ENCODE measurements at regions of chr1 and their contacts with region 1.

Region 1: GRCh38 chr1:176466514-176467220 is 3.7 kb downstream of the PAPPA2 start:
- DNase-seq: no peak
- ATAC-seq: no peak
- H3K4me3 ChIP-seq: no peak overlapping the region
- H3K27ac ChIP-seq: no peak overlapping the region
- H3K4me1 ChIP-seq: no peaks in the 10 kb centered on the region
- H3K27me3 ChIP-seq: no peaks in the 10 kb centered on the region
- CTCF ChIP-seq: peak; percentile 17; the same call in 1 of the 2 replicates
- POLR2A ChIP-seq: no peak
- RAD21 ChIP-seq: peak; percentile 32

Region 2: DNA sequence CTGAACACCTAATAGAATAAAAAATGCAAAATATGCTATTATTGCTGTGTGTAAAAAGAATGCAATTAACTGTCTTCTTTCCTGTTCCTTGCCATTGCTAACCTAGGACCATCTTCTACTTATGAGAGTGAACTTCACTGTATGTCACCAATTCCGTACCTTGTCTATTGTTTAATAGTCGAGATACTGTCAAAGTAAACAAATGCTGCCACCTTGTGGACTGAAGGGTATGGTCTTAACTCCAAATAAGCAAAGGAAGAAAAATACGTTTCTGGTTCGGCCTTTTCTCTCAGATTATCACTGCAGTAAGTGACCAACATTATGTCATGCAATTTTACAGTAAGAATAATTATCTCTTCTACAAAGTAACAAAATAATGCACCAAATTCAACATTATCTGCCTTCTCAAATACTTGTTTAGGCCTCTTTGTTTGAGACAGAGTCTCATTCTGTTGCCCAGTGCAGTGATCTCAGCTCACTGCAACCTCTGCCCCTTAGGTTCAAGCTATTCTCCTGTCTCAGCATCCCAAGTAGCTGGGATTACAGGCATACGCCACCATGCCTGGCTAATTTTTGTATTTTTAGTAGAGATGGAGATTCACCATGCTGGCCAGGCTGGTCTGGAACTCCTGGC is 393.0 kb before region 1 on chr1:
- CTCF ChIA-PET with region 1: no interaction called
- POLR2A ChIA-PET with region 1: no interaction called
- dilution Hi-C with region 1: no loop called
- in situ Hi-C with region 1: no loop called
- intact Hi-C with region 1: loop called (anchors 10 kb)
- DNase-seq: peak; percentile 72
- ATAC-seq: peak; percentile 61
- H3K4me3 ChIP-seq: no peak overlapping the region
- H3K27ac ChIP-seq: no peak overlapping the region
- H3K4me1 ChIP-seq: peaks cover 1% of the 10 kb centered on the region; the same call in 1 of the 2 replicates
- H3K27me3 ChIP-seq: no peaks in the 10 kb centered on the region
- CTCF ChIP-seq: peak; percentile 66
- POLR2A ChIP-seq: no peak
- RAD21 ChIP-seq: peak; percentile 62

Measured in IMR-90 (cell line).